WTC11 (cell line): ENCODE measurements at regions of chr3 and their contacts with region 1.

Region 1: DNA sequence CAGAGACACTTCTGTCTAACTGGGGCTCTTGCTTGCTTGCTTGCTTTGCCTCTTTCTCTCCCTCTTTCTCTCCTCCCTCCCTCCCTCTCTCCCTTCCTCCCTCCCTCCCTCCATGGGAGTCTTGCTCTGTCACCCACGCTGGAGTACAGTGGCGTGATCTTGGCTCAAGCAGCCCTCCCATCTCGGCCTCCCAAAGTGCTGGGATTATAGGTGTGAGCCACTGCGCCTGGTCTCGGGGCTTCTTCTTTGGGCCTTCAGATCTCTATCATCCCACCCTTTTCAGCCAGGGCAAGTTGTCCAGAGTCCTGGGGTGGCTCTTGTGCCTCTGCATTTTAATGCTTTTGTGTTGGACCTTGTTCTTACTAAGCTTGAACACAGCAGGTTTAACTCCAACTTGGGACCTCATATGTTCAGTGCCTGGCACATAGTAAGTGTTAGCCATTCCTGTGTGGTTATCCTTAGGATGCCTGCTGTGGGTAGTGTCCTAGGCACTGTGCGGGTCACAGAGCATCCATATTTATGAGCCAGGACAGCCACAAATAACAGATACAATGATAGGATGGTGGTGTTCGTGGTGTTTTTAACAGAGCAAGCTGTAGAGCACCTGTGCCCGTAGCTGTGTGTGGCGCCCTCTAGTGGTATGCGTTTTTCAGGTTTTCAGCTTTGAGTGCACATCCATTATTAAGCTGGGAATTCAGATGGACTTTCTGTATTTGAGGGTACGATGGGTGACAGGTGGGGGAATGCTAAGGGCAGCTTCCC is 75.1 kb downstream of the CCK start:
- DNase-seq: peak; percentile 76
- ATAC-seq: peak; percentile 75
- H3K4me3 Mint-ChIP-seq: no peak overlapping the region
- H3K27ac Mint-ChIP-seq: peak overlapping the region; percentile 90; the same call in 1 of the 2 replicates
- H3K4me1 Mint-ChIP-seq: peaks cover 38% of the 10 kb centered on the region
- H3K27me3 Mint-ChIP-seq: no peaks in the 10 kb centered on the region
- CTCF ChIP-seq: peak; percentile 90

Region 2: GRCh38 chr3:42118762-42119361 is 72.0 kb before region 1 on chr3:
- CTCF ChIA-PET with region 1: interaction called, 164 read pairs
- POLR2A ChIA-PET with region 1: interaction called, 3 read pairs
- DNase-seq: peak; percentile 54
- ATAC-seq: peak; percentile 86
- H3K4me3 Mint-ChIP-seq: no peak overlapping the region
- H3K27ac Mint-ChIP-seq: peak overlapping the region; percentile 37; the same call in 1 of the 2 replicates
- H3K4me1 Mint-ChIP-seq: peaks cover 42% of the 10 kb centered on the region
- H3K27me3 Mint-ChIP-seq: no peaks in the 10 kb centered on the region
- CTCF ChIP-seq: peak; percentile 34; the same call in 1 of the 2 replicates

Region 3: DNA sequence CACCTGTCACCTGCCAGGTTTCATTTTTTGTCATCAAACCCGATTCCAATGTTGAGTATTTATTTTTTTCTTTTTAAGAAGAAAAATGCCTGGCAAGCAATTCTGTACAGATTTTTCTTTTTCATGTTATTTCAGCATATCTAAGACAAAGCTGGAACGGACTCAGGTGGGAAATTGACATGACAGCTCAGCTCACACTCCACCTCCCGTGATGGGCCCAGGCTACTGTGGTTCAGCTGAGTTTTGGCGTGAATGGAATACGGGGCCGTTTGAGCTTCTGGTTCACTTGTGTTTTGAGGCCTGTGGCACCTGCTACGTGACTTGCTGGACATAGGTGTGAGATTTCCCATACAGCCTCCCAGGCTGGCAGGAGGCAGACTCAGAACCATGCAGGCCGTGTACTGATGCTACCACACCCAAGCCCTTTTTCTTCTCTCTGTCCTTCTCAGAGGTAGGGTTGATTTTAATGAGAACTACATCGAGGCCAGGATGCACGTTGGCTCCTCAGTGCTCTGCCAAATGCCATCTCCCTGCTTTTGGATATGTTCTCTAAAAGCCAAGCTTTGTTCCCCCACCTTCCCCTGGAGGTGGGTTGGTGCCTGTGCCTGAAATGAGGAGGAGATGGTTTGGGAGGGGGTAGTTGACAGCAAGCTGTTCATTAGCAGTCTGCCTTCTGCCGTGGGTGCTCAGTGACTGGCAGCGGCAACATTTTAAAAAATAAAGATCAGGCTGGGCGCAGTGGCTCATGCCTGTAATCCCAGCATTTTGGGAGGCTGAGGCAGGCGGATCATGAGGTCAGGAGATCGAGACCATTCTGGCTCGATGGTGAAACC is 51.0 kb before region 1 on chr3:
- CTCF ChIA-PET with region 1: interaction called, 10 read pairs
- POLR2A ChIA-PET with region 1: no interaction called
- DNase-seq: no peak
- ATAC-seq: no peak
- H3K4me3 Mint-ChIP-seq: no peak overlapping the region
- H3K27ac Mint-ChIP-seq: no peak overlapping the region
- H3K4me1 Mint-ChIP-seq: peaks cover 9% of the 10 kb centered on the region
- H3K27me3 Mint-ChIP-seq: no peaks in the 10 kb centered on the region
- CTCF ChIP-seq: no peak

Region 4: DNA sequence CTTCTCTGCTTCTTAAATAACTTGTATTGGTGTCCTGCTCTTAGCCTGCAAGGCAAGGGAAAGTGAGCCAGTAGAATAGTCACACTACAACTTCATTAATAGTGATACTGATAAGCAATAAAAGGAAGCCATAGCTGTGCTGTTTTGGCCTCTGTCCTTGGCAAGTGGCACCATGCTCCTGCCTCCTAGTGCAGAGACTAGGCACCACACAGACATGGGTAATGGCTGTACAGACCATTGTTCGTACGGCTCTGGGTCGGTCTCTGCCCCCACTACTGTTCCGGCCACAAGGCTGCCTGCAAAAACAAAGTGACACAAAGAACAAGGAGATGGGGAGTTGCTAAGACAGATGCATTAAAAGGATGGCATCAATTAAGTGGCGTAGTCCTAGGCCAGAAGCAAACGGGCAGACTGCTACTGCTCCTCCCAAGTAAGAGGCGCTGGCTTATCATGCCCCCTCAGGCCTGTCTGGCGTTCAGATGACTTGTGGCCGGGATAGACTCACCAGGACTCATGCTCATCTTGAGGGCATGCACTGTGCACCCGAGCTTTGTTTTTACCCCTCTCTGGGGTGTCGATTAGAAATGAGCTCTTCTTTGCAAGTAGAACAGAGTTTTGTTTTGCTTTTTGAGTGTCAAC is 24.1 kb before region 1 on chr3:
- CTCF ChIA-PET with region 1: interaction called, 35 read pairs
- POLR2A ChIA-PET with region 1: interaction called, 3 read pairs
- DNase-seq: no peak
- ATAC-seq: no peak
- H3K4me3 Mint-ChIP-seq: no peak overlapping the region
- H3K27ac Mint-ChIP-seq: no peak overlapping the region; the same call in 1 of the 2 replicates
- H3K4me1 Mint-ChIP-seq: peaks cover 25% of the 10 kb centered on the region
- H3K27me3 Mint-ChIP-seq: no peaks in the 10 kb centered on the region
- CTCF ChIP-seq: no peak

Region 5: DNA sequence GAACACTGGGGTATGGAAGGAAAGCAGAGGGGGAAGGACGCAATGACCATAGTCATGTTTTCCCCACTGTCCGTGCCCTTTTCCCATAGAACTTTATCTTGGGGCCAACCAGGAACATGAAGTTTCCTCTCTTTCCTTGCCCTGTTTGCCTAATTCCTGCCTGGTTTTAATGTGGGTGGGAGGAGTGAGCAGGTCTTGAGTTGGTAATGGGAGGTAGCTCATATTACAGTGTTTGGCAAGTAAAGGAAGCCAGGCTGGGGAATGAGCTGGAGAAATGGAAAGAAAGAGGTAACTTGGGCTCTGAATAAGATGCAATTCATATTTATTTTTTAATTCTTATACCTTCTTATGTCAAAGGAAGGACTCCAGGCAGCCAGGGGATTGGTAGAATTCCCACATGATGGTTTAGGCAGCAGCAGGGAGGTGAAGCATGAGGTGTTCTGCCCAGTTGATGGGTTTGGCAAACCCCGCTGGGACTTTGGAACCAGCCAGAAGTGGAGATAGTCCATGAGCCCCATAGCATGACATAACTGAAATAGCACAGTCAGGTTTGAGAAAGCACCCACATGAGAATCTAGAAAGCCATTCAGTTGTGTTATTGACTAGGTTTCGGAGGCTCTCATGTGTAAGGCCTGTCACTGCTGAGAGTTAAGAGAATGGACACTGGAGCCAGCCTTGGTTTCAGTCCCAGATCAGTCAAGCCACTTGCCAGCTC is 15.1 kb after region 1 on chr3:
- CTCF ChIA-PET with region 1: interaction called, 24 read pairs
- POLR2A ChIA-PET with region 1: no interaction called
- DNase-seq: no peak
- ATAC-seq: peak; percentile 57
- H3K4me3 Mint-ChIP-seq: no peak overlapping the region
- H3K27ac Mint-ChIP-seq: no peak overlapping the region
- H3K4me1 Mint-ChIP-seq: peaks cover 9% of the 10 kb centered on the region
- H3K27me3 Mint-ChIP-seq: no peaks in the 10 kb centered on the region
- CTCF ChIP-seq: no peak

Region 6: DNA sequence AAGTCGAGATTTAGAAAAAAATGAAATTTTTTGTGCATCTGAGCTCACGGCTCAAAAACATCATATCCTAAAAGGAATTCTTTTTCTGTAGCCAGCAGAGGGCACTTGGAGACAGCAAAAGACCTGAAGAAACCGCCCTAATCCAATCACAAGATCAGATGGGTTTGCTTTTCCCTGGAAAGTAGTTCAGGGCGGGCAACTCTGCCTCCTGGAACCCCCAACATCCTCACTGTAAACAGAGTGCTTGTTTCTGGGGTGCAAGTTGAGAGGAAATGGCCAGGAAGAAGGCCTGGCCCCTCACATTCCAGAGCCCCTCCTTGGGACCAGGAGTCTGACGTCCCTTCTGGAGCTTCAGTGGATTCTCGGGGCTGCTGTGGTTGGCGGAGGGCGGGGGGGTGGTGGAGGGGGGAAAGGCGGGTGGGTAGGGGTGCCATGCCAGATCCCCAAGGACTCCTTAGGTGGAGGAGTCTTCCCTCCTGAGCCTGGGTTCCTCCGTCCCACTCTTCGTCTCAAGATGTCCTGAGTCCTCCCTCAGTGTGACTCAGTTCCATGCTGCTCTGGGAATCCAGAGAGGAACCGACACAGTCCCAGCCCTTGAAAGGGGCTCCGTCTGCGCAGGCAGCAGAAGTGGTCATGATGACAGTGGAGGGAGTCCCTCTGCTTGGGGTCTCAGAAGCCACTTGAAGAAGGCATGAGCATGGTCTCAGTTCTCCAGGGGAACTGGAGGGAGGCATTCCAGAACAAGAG is 39.2 kb after region 1 on chr3:
- CTCF ChIA-PET with region 1: interaction called, 26 read pairs
- POLR2A ChIA-PET with region 1: no interaction called
- DNase-seq: no peak
- ATAC-seq: peak; percentile 72
- H3K4me3 Mint-ChIP-seq: no peak overlapping the region
- H3K27ac Mint-ChIP-seq: no peak overlapping the region
- H3K4me1 Mint-ChIP-seq: peaks cover 2% of the 10 kb centered on the region
- H3K27me3 Mint-ChIP-seq: peaks cover 2% of the 10 kb centered on the region; the same call in 1 of the 2 replicates
- CTCF ChIP-seq: peak; percentile 24; the same call in 1 of the 2 replicates

Region 7: GRCh38 chr3:42351207-42351606 is 160.3 kb after region 1 on chr3:
- CTCF ChIA-PET with region 1: no interaction called
- POLR2A ChIA-PET with region 1: no interaction called
- DNase-seq: no peak
- ATAC-seq: no peak
- H3K4me3 Mint-ChIP-seq: no peak overlapping the region
- H3K27ac Mint-ChIP-seq: no peak overlapping the region
- H3K4me1 Mint-ChIP-seq: no peaks in the 10 kb centered on the region
- H3K27me3 Mint-ChIP-seq: no peaks in the 10 kb centered on the region; the same call in 1 of the 2 replicates
- CTCF ChIP-seq: no peak